Activated B cell treated with CpG ODN at 0.5 μM for 24 hours (primary cell): ENCODE measurements at regions of chr1 and their contacts with region 1.

Region 1: GRCh38 chr1:176897350-176898236 is 266.9 kb downstream of the ASTN1 start:
- DNase-seq: peak; percentile 23
- ATAC-seq: no peak
- H3K4me3 Mint-ChIP-seq: peak overlapping the region; percentile 47
- H3K27ac Mint-ChIP-seq: no peak overlapping the region
- H3K4me1 Mint-ChIP-seq: peaks cover 6% of the 10 kb centered on the region
- H3K27me3 Mint-ChIP-seq: peaks cover 5% of the 10 kb centered on the region
- CTCF ChIP-seq: no peak

Region 2: DNA sequence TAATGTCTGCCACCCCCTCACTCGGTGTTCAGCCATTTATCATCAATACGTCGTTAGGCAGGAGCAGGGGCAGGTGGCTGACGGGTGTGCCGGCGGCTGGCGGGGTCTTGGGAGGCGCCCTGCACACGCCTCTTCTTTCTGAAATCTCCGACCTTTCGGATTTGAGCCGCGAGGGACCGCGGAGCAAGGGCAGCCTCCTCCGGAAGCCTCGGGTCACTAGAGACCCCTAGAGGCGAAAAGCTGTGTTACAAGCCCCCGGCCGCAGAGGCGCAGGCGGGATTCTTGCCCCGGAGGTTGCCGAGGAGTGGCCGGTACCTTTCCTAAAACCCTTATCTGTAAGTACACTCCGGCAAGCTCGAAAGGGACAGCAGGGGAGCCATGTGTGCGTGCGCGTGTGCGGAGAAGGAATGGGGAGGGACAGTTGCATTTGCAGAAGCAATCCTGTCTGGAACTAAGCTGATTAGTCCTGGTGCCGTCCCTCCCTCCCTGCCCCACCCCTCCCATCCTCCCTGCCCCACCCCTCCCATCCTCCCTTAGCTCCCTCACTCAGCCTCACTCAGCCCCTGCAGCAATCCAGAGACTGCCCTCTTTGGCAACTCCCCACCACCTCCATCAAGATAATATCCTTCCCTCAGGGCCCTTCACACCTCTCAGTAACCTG is 284.2 kb after region 1 on chr1:
- CTCF ChIA-PET with region 1: no interaction called
- POLR2A ChIA-PET with region 1: no interaction called
- intact Hi-C with region 1: loop called (anchors 1 kb)
- DNase-seq: peak; percentile 21
- ATAC-seq: no peak
- H3K4me3 Mint-ChIP-seq: peak overlapping the region; percentile 61
- H3K27ac Mint-ChIP-seq: no peak overlapping the region
- H3K4me1 Mint-ChIP-seq: peaks cover 13% of the 10 kb centered on the region
- H3K27me3 Mint-ChIP-seq: peaks cover 26% of the 10 kb centered on the region
- CTCF ChIP-seq: no peak

Region 3: GRCh38 chr1:177355595-177355994 is 458.0 kb after region 1 on chr1:
- CTCF ChIA-PET with region 1: no interaction called
- POLR2A ChIA-PET with region 1: no interaction called
- intact Hi-C with region 1: loop called (anchors 5 kb)
- DNase-seq: no peak
- ATAC-seq: no peak
- H3K4me3 Mint-ChIP-seq: no peak overlapping the region
- H3K27ac Mint-ChIP-seq: no peak overlapping the region
- H3K4me1 Mint-ChIP-seq: no peaks in the 10 kb centered on the region
- H3K27me3 Mint-ChIP-seq: no peaks in the 10 kb centered on the region
- CTCF ChIP-seq: no peak